Mammary epithelial cell (primary cell): ENCODE measurements at regions of chr2 and their contacts with region 1.

Region 1: GRCh38 chr2:108351889-108352288 is 25.9 kb upstream of the SULT1C4 start:
- DNase-seq: no peak
- H3K4me3 ChIP-seq: no peak overlapping the region
- H3K27ac ChIP-seq: no peak overlapping the region
- H3K4me1 ChIP-seq: no peaks in the 10 kb centered on the region
- H3K27me3 ChIP-seq: no peaks in the 10 kb centered on the region
- CTCF ChIP-seq: no peak

Region 2: DNA sequence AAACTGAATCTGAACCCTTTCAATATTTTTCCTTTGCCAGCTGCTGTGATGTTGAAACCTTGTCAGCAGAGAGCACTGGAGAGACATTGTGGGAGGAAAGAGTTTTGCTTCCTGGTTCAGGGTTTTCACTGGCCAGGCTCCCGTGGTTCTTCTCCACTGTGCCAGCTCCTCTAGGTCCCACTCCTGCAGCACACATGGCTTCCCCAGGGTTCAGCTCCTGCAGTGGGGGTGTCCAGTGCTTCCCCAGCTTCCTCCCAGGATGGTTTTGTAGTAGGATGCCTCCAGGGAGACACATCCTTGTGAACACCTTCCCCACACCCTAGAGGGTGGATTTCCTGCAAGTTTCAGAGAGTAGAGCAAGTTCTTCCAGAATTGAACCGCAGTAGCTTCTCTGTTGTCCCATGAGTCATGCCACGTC is 136.1 kb before region 1 on chr2:
- CTCF ChIA-PET with region 1: no interaction called
- dilution Hi-C with region 1: no loop called
- in situ Hi-C with region 1: no loop called
- intact Hi-C with region 1: loop called (anchors 2 kb)
- DNase-seq: peak; percentile 64
- H3K4me3 ChIP-seq: no peak overlapping the region
- H3K27ac ChIP-seq: no peak overlapping the region
- H3K4me1 ChIP-seq: peaks cover 3% of the 10 kb centered on the region
- H3K27me3 ChIP-seq: no peaks in the 10 kb centered on the region
- CTCF ChIP-seq: peak; percentile 33 to 59

Region 3: DNA sequence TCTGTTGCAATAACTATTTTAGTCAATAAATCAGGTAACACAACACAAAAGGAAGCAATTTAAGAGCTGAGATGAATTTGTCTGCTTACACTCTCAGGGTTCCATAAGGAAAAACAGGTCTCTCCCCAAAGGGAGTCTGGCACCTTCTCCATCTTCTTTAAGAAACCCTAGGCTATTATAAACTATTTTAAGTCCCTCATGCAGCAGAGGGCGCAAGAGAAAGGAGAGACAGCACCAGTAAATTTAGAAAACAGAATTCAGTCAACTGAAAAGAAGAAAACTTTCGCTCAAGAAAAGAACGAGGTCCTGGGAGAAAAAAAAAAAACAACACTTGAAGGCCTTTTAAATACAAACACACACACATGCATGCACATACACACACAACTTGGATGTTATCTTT is 45.0 kb after region 1 on chr2:
- CTCF ChIA-PET with region 1: interaction called, 15 read pairs
- dilution Hi-C with region 1: no loop called
- in situ Hi-C with region 1: no loop called
- intact Hi-C with region 1: loop called (anchors 2 kb)
- DNase-seq: peak; percentile 39
- H3K4me3 ChIP-seq: no peak overlapping the region
- H3K27ac ChIP-seq: no peak overlapping the region
- H3K4me1 ChIP-seq: no peaks in the 10 kb centered on the region
- H3K27me3 ChIP-seq: no peaks in the 10 kb centered on the region
- CTCF ChIP-seq: peak; percentile 28 to 59

Region 4: GRCh38 chr2:108594132-108594981 is 242.5 kb after region 1 on chr2:
- CTCF ChIA-PET with region 1: interaction called, 26 read pairs
- dilution Hi-C with region 1: no loop called
- in situ Hi-C with region 1: loop called in 1 of 2 experiments (anchors 10 kb)
- intact Hi-C with region 1: no loop called
- DNase-seq: peak; percentile 91
- H3K4me3 ChIP-seq: peak overlapping the region; percentile 22 to 38 (median 24)
- H3K27ac ChIP-seq: peak overlapping the region; percentile 98
- H3K4me1 ChIP-seq: peaks cover 44% of the 10 kb centered on the region
- H3K27me3 ChIP-seq: no peaks in the 10 kb centered on the region
- CTCF ChIP-seq: no peak